ENCODE measurements at regions of chr2 and their contacts with region 1.

Region 1: GRCh38 chr2:236541008-236541562 is 28.5 kb upstream of the ACKR3 start:
- DNase-seq: no peak
- H3K4me3 ChIP-seq: no peak overlapping the region
- H3K27ac ChIP-seq: no peak overlapping the region
- H3K4me1 ChIP-seq: no peaks in the 10 kb centered on the region
- H3K27me3 ChIP-seq: no peaks in the 10 kb centered on the region
- CTCF ChIP-seq: no peak
- POLR2A ChIP-seq: no peak

Region 2: DNA sequence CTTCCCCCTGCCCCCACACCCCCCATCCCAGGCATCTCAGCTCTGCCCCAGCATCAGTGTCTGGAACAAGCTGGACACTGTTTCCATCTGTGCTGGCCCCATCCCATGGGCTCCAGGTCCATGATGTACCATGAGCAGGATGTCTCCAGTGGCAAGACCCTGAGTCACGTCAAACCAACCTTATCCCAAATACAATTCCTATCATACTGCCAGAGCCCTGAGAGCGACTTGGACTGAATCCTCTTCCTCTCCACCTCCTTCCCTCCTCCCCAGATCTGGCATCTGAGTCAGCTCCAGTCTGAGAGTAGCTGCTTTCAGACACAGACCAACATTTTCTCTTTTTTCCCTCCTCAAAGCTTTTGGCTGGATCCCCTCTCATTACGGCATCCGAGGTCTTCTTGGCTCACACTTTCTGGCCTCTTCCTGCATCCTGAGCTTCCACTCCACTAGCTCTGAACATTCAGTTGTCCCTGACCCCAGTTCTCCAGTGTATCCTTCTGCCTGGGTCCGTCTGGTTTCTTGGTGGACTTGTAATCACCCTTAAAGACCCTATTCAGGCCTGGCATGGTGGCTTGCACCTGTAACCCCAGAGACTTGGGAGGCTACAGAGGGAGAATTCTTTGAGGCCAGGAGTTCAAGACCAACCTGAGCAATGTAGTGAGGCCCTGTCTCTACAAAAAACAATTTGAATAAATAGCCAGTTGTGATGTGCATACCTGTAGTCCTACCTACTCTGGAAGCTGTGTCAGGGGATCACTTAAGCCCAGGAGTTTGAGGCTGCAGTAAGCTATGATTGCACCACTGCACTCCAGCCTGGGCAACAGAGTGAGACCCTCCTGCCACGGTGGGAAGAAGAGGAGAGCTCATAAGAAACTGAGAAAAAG is 96.8 kb after region 1 on chr2:
- intact Hi-C with region 1: loop called (anchors 5 kb)
- DNase-seq: no peak
- H3K4me3 ChIP-seq: no peak overlapping the region
- H3K27ac ChIP-seq: no peak overlapping the region
- H3K4me1 ChIP-seq: no peaks in the 10 kb centered on the region
- H3K27me3 ChIP-seq: no peaks in the 10 kb centered on the region
- CTCF ChIP-seq: no peak
- POLR2A ChIP-seq: no peak